Tibial artery (tissue), 4 donors: ENCODE measurements at regions of chr9 and their contacts with region 1.

Region 1: GRCh38 chr9:9790216-9790872 is 822.5 kb downstream of the PTPRD start:
- DNase-seq: no peak
- H3K4me3 ChIP-seq: no peak overlapping the region
- H3K27ac ChIP-seq: no peak overlapping the region
- H3K4me1 ChIP-seq: no peaks in the 10 kb centered on the region
- H3K27me3 ChIP-seq: no peaks in the 10 kb centered on the region
- CTCF ChIP-seq: peak; percentile 83 to 87

Region 2: GRCh38 chr9:9523476-9524139 is 266.7 kb before region 1 on chr9:
- intact Hi-C with region 1: no loop called
- DNase-seq: no peak
- H3K4me3 ChIP-seq: no peak overlapping the region
- H3K27ac ChIP-seq: no peak overlapping the region
- H3K4me1 ChIP-seq: no peaks in the 10 kb centered on the region
- H3K27me3 ChIP-seq: no peaks in the 10 kb centered on the region
- CTCF ChIP-seq: no peak

Region 3: GRCh38 chr9:9605681-9606080 is 184.7 kb before region 1 on chr9:
- intact Hi-C with region 1: loop called (anchors 5 kb)
- DNase-seq: no peak
- H3K4me3 ChIP-seq: no peak overlapping the region
- H3K27ac ChIP-seq: no peak overlapping the region
- H3K4me1 ChIP-seq: peaks cover 0 to 8% (median 0%) of the 10 kb centered on the region in 4 donors
- H3K27me3 ChIP-seq: no peaks in the 10 kb centered on the region
- CTCF ChIP-seq: no peak